SK-N-SH (cell line): ENCODE measurements at regions of chr22 and their contacts with region 1.

Region 1: GRCh38 chr22:22587577-22588188 is 28.6 kb upstream of the PRAME start:
- DNase-seq: no peak
- H3K4me3 ChIP-seq: no peak overlapping the region
- H3K27ac ChIP-seq: no peak overlapping the region
- H3K4me1 ChIP-seq: no peaks in the 10 kb centered on the region; a peak in 1 of 4 replicates
- H3K27me3 ChIP-seq: peaks cover 3% of the 10 kb centered on the region; the same call in 1 of the 2 replicates
- CTCF ChIP-seq: no peak
- EP300 ChIP-seq: no peak
- RAD21 ChIP-seq: no peak

Region 2: DNA sequence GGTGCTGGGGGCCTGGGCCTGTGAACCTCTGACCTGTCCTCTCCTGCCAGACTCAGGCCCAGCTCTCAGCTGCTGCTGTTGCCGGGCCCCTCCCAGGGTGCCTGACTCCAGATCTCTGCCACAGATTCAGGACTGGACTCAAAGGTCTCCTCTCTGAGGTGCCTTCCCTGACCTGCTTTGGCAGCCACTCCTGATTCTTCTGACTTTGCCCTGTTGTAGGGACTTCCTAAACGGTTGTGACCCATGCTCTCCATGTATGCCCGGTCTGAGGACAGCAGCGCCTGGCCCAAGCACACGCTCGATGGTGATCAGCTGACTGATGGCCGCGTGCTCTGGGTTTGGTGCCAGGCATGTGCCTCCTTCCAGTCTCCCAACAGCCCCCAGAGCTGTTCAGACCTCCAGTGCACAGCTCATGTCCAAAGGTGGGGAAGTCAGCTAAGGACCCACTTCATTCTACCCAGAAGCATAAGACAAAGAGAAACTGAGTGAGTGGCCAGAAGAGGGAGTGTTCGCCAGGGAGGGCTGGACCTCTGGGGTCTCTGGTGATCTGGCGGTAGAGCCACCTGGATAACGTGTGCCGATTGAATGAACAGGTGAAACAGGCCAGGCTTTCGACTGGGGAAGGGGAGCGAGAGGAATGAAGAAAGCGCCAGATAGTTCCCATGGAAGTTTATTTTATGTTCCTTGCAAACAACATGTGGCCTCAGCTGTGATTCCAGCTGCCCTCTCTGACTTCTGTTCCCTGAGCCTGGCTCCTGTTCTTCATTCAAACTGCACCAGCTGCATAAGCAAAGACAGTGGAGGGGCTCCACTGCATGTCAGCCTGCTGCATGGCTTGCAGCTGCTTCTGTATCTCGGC is 597.0 kb before region 1 on chr22:
- CTCF ChIA-PET with region 1: no interaction called
- POLR2A ChIA-PET with region 1: no interaction called
- DNase-seq: no peak
- H3K4me3 ChIP-seq: no peak overlapping the region
- H3K27ac ChIP-seq: no peak overlapping the region
- H3K4me1 ChIP-seq: peaks cover 0 to 5% of the 10 kb centered on the region in 2 experiments; a peak in 1 of 4 replicates
- H3K27me3 ChIP-seq: peaks cover 18% of the 10 kb centered on the region
- CTCF ChIP-seq: no peak
- EP300 ChIP-seq: no peak
- RAD21 ChIP-seq: no peak

Region 3: GRCh38 chr22:22558972-22559603 is 28.6 kb before region 1 on chr22 and contains the start of gene PRAME:
- CTCF ChIA-PET with region 1: interaction called, 22 read pairs
- POLR2A ChIA-PET with region 1: no interaction called
- DNase-seq: peak; percentile 88
- H3K4me3 ChIP-seq: peak within 1 kb of the TSS; percentile 58 to 92
- H3K27ac ChIP-seq: peak within 1 kb of the TSS; percentile 87 to 89
- H3K4me1 ChIP-seq: peaks cover 4 to 31% of the 10 kb centered on the region in 2 experiments; a peak in 3 of 4 replicates
- H3K27me3 ChIP-seq: no peaks in the 10 kb centered on the region
- CTCF ChIP-seq: peak; percentile 98
- EP300 ChIP-seq: peak; percentile 31 to 54; a peak in 1 of 4 replicates
- RAD21 ChIP-seq: peak; percentile 67
- polyA plus RNA-seq, gene PRAME: 193 and 241 TPM in 2 replicates

Region 4: GRCh38 chr22:22600531-22601261 is 13.0 kb after region 1 on chr22:
- CTCF ChIA-PET with region 1: interaction called, 11 read pairs
- POLR2A ChIA-PET with region 1: no interaction called
- DNase-seq: no peak
- H3K4me3 ChIP-seq: no peak overlapping the region
- H3K27ac ChIP-seq: no peak overlapping the region
- H3K4me1 ChIP-seq: no peaks in the 10 kb centered on the region
- H3K27me3 ChIP-seq: no peaks in the 10 kb centered on the region; the same call in 1 of the 2 replicates
- CTCF ChIP-seq: no peak
- EP300 ChIP-seq: no peak
- RAD21 ChIP-seq: no peak

Region 5: GRCh38 chr22:22687638-22688500 is 100.2 kb after region 1 on chr22:
- CTCF ChIA-PET with region 1: interaction called, 17 read pairs
- POLR2A ChIA-PET with region 1: no interaction called
- DNase-seq: peak; percentile 60
- H3K4me3 ChIP-seq: no peak overlapping the region
- H3K27ac ChIP-seq: no peak overlapping the region
- H3K4me1 ChIP-seq: no peaks in the 10 kb centered on the region; a peak in 1 of 4 replicates
- H3K27me3 ChIP-seq: no peaks in the 10 kb centered on the region
- CTCF ChIP-seq: peak; percentile 75
- EP300 ChIP-seq: no peak
- RAD21 ChIP-seq: peak; percentile 79